Head of caudate nucleus (tissue), 42 donors: ENCODE measurements at regions of chr1 and their contacts with region 1.

Region 1: GRCh38 chr1:11012250-11013171 is at the start of gene TARDBP:
- DNase-seq: peak; percentile 72 to 96 (median 91)

Region 2: GRCh38 chr1:10979483-10979920 is 33.0 kb before region 1 on chr1:
- intact Hi-C with region 1: loop called (anchors 1 kb)
- DNase-seq: peak; percentile 47 to 94 (median 84)